IMR-90 (cell line): ENCODE measurements at regions of chrX and their contacts with region 1.

Region 1: GRCh38 chrX:18210470-18210869 is 10.2 kb downstream of the BEND2 start:
- DNase-seq: peak; percentile 4
- ATAC-seq: no peak
- H3K4me3 ChIP-seq: no peak overlapping the region
- H3K27ac ChIP-seq: no peak overlapping the region
- H3K4me1 ChIP-seq: no peaks in the 10 kb centered on the region
- H3K27me3 ChIP-seq: no peaks in the 10 kb centered on the region
- CTCF ChIP-seq: peak; percentile 26
- POLR2A ChIP-seq: no peak
- RAD21 ChIP-seq: peak; percentile 21; the same call in 1 of the 2 replicates

Region 2: GRCh38 chrX:17242470-17242869 is 968.0 kb before region 1 on chrX:
- CTCF ChIA-PET with region 1: no interaction called
- POLR2A ChIA-PET with region 1: no interaction called
- dilution Hi-C with region 1: no loop called
- in situ Hi-C with region 1: no loop called
- intact Hi-C with region 1: loop called (anchors 2 kb)
- DNase-seq: peak; percentile 55
- ATAC-seq: peak; percentile 88
- H3K4me3 ChIP-seq: no peak overlapping the region
- H3K27ac ChIP-seq: no peak overlapping the region
- H3K4me1 ChIP-seq: no peaks in the 10 kb centered on the region
- H3K27me3 ChIP-seq: peaks cover 6% of the 10 kb centered on the region
- CTCF ChIP-seq: peak; percentile 76
- POLR2A ChIP-seq: no peak
- RAD21 ChIP-seq: peak; percentile 70

Region 3: GRCh38 chrX:17697191-17697590 is 513.3 kb before region 1 on chrX:
- CTCF ChIA-PET with region 1: no interaction called
- POLR2A ChIA-PET with region 1: no interaction called
- dilution Hi-C with region 1: no loop called
- in situ Hi-C with region 1: no loop called
- intact Hi-C with region 1: loop called (anchors 2 kb)
- DNase-seq: peak; percentile 15
- ATAC-seq: 0 out of 2 replicates have a peak, but pooled peaks have one; percentile 27
- H3K4me3 ChIP-seq: no peak overlapping the region
- H3K27ac ChIP-seq: no peak overlapping the region
- H3K4me1 ChIP-seq: no peaks in the 10 kb centered on the region
- H3K27me3 ChIP-seq: no peaks in the 10 kb centered on the region; the same call in 1 of the 2 replicates
- CTCF ChIP-seq: no peak; the same call in 1 of the 2 replicates
- POLR2A ChIP-seq: no peak
- RAD21 ChIP-seq: peak; percentile 37

Region 4: DNA sequence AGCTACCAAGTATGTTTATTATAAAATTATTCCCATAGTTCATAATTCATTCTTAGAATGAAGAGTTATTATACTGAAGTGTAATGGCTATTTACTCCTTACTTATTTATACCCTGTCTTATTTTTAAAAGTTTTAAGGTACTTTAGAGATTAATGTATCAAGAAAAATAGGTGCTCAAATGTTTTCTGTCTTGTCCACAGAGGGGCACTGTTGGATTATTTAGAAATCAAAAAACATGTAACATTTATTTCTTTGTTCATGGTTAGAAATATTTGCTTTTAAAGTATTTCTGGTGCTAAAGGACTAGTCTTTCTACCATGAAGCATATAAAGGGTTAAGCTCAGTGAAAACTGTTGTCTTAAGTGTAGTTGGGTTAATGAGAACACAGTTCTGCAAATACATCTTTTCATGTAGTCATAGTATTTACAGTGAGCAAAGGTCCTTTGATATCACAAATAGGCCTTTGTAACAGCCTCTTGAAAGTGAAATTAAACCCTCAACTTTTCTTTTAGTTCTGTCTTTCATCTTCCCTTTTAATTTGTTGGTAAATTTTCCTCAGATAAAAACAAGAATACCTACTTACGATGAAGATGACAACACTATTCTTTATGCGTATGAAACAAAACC is 465.5 kb before region 1 on chrX:
- CTCF ChIA-PET with region 1: no interaction called
- POLR2A ChIA-PET with region 1: no interaction called
- dilution Hi-C with region 1: no loop called
- in situ Hi-C with region 1: no loop called
- intact Hi-C with region 1: loop called (anchors 5 kb)
- DNase-seq: no peak
- ATAC-seq: no peak
- H3K4me3 ChIP-seq: no peak overlapping the region
- H3K27ac ChIP-seq: no peak overlapping the region
- H3K4me1 ChIP-seq: no peaks in the 10 kb centered on the region
- H3K27me3 ChIP-seq: no peaks in the 10 kb centered on the region
- CTCF ChIP-seq: peak; percentile 46
- POLR2A ChIP-seq: no peak
- RAD21 ChIP-seq: peak; percentile 26

Region 5: DNA sequence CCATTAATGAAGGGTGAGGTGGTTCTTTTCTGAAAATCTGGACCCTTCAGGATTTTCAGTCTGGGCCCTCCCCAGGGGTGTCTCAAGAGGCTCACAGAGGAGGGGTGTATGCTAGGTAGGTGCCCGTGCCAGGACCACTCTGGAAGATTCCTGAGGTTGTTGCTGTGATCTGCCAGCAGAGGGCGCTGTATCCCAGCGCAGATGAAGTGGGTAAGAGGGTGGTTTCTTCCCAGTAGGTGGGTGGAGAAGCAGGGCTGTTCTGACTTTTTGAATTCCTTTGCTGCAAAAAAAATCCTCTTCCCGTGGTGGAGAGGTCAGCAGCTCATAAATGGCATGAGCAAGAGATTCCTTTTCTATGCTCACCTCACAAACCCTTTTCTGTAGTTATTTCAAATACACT is 422.0 kb before region 1 on chrX:
- CTCF ChIA-PET with region 1: no interaction called
- POLR2A ChIA-PET with region 1: no interaction called
- dilution Hi-C with region 1: no loop called
- in situ Hi-C with region 1: no loop called
- intact Hi-C with region 1: loop called (anchors 10 kb)
- DNase-seq: peak; percentile 16
- ATAC-seq: peak; percentile 68
- H3K4me3 ChIP-seq: no peak overlapping the region
- H3K27ac ChIP-seq: no peak overlapping the region
- H3K4me1 ChIP-seq: no peaks in the 10 kb centered on the region
- H3K27me3 ChIP-seq: peaks cover 1% of the 10 kb centered on the region; the same call in 1 of the 2 replicates
- CTCF ChIP-seq: peak; percentile 47
- POLR2A ChIP-seq: no peak
- RAD21 ChIP-seq: peak; percentile 57

Region 6: GRCh38 chrX:17876164-17876563 is 334.3 kb before region 1 on chrX:
- CTCF ChIA-PET with region 1: no interaction called
- POLR2A ChIA-PET with region 1: no interaction called
- dilution Hi-C with region 1: no loop called
- in situ Hi-C with region 1: no loop called
- intact Hi-C with region 1: no loop called
- DNase-seq: no peak
- ATAC-seq: no peak
- H3K4me3 ChIP-seq: no peak overlapping the region
- H3K27ac ChIP-seq: no peak overlapping the region
- H3K4me1 ChIP-seq: no peaks in the 10 kb centered on the region
- H3K27me3 ChIP-seq: no peaks in the 10 kb centered on the region
- CTCF ChIP-seq: no peak
- POLR2A ChIP-seq: no peak
- RAD21 ChIP-seq: no peak

Region 7: GRCh38 chrX:18410043-18410442 is 199.6 kb after region 1 on chrX:
- CTCF ChIA-PET with region 1: no interaction called
- POLR2A ChIA-PET with region 1: no interaction called
- dilution Hi-C with region 1: no loop called
- in situ Hi-C with region 1: no loop called
- intact Hi-C with region 1: no loop called
- DNase-seq: peak; percentile 55
- ATAC-seq: peak; percentile 59
- H3K4me3 ChIP-seq: no peak overlapping the region
- H3K27ac ChIP-seq: no peak overlapping the region
- H3K4me1 ChIP-seq: peaks cover 2% of the 10 kb centered on the region; the same call in 1 of the 2 replicates
- H3K27me3 ChIP-seq: no peaks in the 10 kb centered on the region
- CTCF ChIP-seq: peak; percentile 54
- POLR2A ChIP-seq: no peak
- RAD21 ChIP-seq: peak; percentile 63